ENCODE measurements at regions of chr22 and their contacts with region 1.

Region 1: GRCh38 chr22:19970479-19971275 is 29.1 kb upstream of the TXNRD2 start:
- DNase-seq: peak; percentile 83
- ATAC-seq: peak; percentile 80
- H3K4me3 Mint-ChIP-seq: no peak overlapping the region
- H3K27ac Mint-ChIP-seq: no peak overlapping the region
- H3K4me1 Mint-ChIP-seq: peaks cover 17% of the 10 kb centered on the region
- H3K27me3 Mint-ChIP-seq: no peaks in the 10 kb centered on the region
- CTCF ChIP-seq: peak; percentile 96

Region 2: DNA sequence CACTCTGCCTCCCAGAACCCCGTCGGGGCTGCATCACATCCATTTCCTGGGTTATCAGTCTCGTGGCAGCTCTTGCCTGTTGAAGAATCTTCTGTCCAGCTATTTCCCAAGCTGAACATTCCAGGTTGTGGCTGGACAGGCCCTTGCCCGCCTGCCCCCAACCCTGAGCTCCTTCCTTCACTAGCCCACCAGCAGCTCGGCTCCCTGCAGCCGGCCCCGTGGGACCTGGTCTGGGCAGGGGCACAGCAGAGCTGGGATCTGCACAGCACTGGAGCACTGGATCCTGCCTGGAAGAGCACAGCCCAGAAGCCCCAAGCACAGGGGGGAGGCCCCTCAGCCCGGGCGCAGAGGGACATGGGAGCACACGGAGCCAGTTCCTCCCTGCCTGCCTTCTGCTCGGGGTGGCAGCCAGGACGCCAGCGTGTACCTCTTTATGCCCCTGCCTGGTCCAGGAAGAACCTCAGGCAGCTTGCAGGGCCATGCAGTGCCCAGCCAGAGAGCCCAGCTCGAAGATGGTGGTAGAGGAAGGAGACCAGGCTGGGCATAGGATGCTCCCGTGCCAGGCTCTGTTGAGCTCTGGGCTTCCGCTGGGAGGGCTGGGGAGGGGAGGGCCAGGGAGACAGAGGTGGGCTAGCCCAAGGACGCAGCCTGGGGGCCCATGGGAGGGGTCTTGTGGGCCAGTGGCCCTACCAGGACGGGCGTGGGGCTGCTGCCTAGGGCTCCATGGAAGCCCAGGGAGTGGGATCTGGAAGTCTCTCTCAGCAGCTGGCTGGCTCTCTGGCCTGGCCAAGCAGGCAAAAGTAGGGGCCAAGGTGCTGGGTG is 99.4 kb before region 1 on chr22:
- CTCF ChIA-PET with region 1: no interaction called
- POLR2A ChIA-PET with region 1: no interaction called
- intact Hi-C with region 1: no loop called
- DNase-seq: peak; percentile 0
- ATAC-seq: no peak
- H3K4me3 Mint-ChIP-seq: no peak overlapping the region
- H3K27ac Mint-ChIP-seq: no peak overlapping the region
- H3K4me1 Mint-ChIP-seq: peaks cover 14% of the 10 kb centered on the region
- H3K27me3 Mint-ChIP-seq: no peaks in the 10 kb centered on the region
- CTCF ChIP-seq: no peak

Region 3: DNA sequence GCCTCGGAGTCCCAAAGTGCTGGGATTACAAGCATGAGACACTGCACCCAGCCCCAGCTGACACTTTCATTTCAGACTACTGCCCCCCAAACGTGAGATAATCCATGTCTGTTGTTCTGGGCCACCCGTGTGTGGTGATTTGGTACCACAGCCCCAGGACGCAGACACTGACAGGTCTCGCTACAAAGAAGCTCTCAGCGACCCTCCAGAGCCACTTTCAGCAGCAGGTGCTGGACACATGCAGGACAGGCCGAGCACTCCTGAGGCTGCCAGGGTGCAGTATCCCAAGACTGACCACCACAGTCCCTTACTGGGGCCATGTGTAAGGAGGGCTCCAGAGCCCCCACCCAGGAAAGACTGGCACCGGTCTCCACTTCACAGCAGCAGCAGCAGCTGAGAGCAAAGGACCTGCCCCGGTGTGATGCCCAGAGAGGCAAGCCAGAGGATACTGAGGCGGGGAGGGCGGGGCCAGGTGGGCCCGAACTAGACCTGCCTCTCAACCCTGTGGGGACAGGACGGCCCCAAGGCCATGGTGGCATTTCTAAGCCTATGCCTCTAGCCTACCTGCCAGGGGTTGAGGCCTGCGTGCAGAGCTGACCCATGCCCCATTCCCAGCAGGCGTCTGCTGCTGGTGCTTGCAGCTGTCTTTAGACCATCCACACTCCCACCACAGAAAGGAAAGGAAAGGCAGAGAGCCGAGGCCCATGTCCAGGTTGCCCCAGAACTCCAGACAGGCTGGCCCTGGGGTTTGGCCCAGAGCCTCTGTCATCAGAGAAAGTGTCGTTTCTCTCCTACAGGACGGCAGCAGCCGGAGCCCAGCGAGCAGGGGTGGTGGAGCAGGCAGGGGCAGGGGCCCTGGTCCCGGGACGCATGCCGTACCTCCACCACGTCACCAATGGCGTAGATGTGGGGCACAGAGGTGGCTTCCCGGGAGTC is 88.0 kb before region 1 on chr22:
- CTCF ChIA-PET with region 1: no interaction called
- POLR2A ChIA-PET with region 1: no interaction called
- intact Hi-C with region 1: no loop called
- DNase-seq: peak; percentile 0
- ATAC-seq: no peak
- H3K4me3 Mint-ChIP-seq: no peak overlapping the region
- H3K27ac Mint-ChIP-seq: no peak overlapping the region
- H3K4me1 Mint-ChIP-seq: peaks cover 21% of the 10 kb centered on the region
- H3K27me3 Mint-ChIP-seq: no peaks in the 10 kb centered on the region
- CTCF ChIP-seq: no peak

Region 4: GRCh38 chr22:20013382-20013871 is 42.8 kb after region 1 on chr22:
- CTCF ChIA-PET with region 1: interaction called, 75 read pairs
- POLR2A ChIA-PET with region 1: no interaction called
- intact Hi-C with region 1: no loop called
- DNase-seq: peak; percentile 72
- ATAC-seq: peak; percentile 25
- H3K4me3 Mint-ChIP-seq: no peak overlapping the region
- H3K27ac Mint-ChIP-seq: no peak overlapping the region
- H3K4me1 Mint-ChIP-seq: peaks cover 3% of the 10 kb centered on the region
- H3K27me3 Mint-ChIP-seq: peaks cover 18% of the 10 kb centered on the region
- CTCF ChIP-seq: peak; percentile 72

Region 5: GRCh38 chr22:20027966-20028854 is 57.5 kb after region 1 on chr22:
- CTCF ChIA-PET with region 1: no interaction called
- POLR2A ChIA-PET with region 1: no interaction called
- intact Hi-C with region 1: loop called (anchors 5 kb)
- DNase-seq: peak; percentile 44
- ATAC-seq: peak; percentile 65
- H3K4me3 Mint-ChIP-seq: no peak overlapping the region
- H3K27ac Mint-ChIP-seq: no peak overlapping the region
- H3K4me1 Mint-ChIP-seq: peaks cover 16% of the 10 kb centered on the region
- H3K27me3 Mint-ChIP-seq: no peaks in the 10 kb centered on the region
- CTCF ChIP-seq: peak; percentile 56

Region 6: DNA sequence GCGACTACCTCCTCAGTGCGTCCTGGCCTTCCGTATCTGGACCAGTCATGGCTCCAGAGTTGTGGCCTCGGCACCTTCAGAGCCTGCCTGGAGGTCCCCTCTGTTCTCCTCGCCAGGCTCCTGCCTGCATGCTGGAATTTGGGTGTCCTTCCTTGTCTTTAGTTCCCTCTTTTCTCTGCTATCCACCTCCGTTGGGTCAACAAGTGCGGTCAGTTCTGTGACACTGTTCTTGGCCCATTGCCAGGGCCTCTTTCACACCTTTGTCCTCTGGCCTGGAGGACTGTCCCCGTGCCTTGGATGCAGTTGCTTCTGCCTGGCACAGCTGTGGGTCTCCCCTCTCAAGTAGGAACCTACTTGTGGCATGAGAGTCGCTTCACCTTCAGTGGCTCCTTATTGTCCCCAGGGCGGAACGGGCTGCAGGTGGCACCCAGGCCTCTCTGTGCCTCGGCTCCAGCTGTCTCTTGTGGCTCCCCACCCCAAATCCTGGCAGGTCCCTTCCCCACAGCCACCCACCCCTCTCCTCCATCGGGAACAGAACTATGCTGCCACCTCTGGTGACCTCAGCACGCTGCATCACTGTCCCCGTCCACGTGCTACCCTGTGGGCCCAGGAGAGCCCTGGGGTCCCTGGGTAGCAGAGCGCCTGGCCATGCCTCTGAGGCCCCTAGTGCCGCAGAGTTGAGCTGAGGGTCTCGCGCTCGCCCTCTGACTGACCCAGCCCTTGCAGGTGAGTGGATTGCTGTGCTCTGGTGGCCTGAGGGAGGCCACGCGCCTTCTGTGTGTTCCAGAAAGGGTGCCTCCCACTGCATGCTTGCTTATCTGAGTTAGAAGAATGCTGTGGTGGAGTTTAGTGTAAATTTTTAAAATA is 114.1 kb after region 1 on chr22:
- CTCF ChIA-PET with region 1: no interaction called
- POLR2A ChIA-PET with region 1: no interaction called
- intact Hi-C with region 1: no loop called
- DNase-seq: peak; percentile 57
- ATAC-seq: no peak
- H3K4me3 Mint-ChIP-seq: no peak overlapping the region
- H3K27ac Mint-ChIP-seq: peak overlapping the region; percentile 14
- H3K4me1 Mint-ChIP-seq: peaks cover 68% of the 10 kb centered on the region
- H3K27me3 Mint-ChIP-seq: no peaks in the 10 kb centered on the region
- CTCF ChIP-seq: peak; percentile 54

Region 7: GRCh38 chr22:20130739-20131596 is 160.3 kb after region 1 on chr22:
- CTCF ChIA-PET with region 1: interaction called, 5 read pairs
- POLR2A ChIA-PET with region 1: interaction called, 5 read pairs
- intact Hi-C with region 1: loop called (anchors 5 kb)
- DNase-seq: peak; percentile 72
- ATAC-seq: peak; percentile 37
- H3K4me3 Mint-ChIP-seq: peak overlapping the region; percentile 46
- H3K27ac Mint-ChIP-seq: no peak overlapping the region
- H3K4me1 Mint-ChIP-seq: peaks cover 45% of the 10 kb centered on the region
- H3K27me3 Mint-ChIP-seq: no peaks in the 10 kb centered on the region
- CTCF ChIP-seq: no peak

Measured in activated CD8-positive, alpha-beta T cell treated with anti-CD3 and anti-CD28 coated beads for 36 hours (primary cell).